Naive thymus-derived CD4-positive, alpha-beta T cell (primary cell): ENCODE measurements at regions of chr1 and their contacts with region 1.

Region 1: DNA sequence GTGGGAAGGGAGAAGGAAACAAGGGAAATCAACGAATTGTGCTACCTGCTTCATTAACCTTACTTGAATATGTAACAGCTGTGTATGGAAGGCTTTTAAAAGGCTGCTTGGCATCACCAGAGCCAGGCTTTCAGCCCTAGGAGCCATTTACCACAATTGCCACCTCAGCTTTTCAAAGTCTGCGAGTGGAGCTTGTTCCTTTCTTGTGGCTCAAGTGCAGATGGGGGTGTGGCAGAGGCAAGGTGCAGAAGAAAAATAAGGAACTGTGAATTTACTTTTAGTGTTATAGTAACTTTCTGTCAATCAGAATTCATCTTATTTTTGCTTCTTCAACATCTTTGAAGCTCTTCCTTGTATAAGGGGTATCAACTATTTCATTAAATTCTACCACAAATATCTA is 17.6 kb downstream of the CLCA2 start:
- DNase-seq: peak in 8 of 9 donors; percentile 8 to 78 (median 64)
- ATAC-seq: peak; percentile 94
- H3K4me3 ChIP-seq: no peak overlapping the region
- H3K4me3 Mint-ChIP-seq: peak overlapping the region in 7 of 10 donors; percentile 3 to 42 (median 8)
- H3K27ac ChIP-seq: no peak overlapping the region
- H3K27ac Mint-ChIP-seq: peak overlapping the region in 1 of 9 donors; percentile 6
- H3K4me1 ChIP-seq: peaks cover 0 to 12% of the 10 kb centered on the region in 2 donors
- H3K4me1 Mint-ChIP-seq: peaks cover 0 to 13% (median 10%) of the 10 kb centered on the region in 7 donors
- H3K27me3 ChIP-seq: no peaks in the 10 kb centered on the region
- H3K27me3 Mint-ChIP-seq: peaks cover 0 to 18% (median 11%) of the 10 kb centered on the region in 5 donors

Region 2: GRCh38 chr1:86460998-86461397 is 19.4 kb after region 1 on chr1:
- CTCF ChIA-PET with region 1: no interaction called
- POLR2A ChIA-PET with region 1: no interaction called
- intact Hi-C with region 1: loop called in 1 of 2 experiments (anchors 1 kb)
- DNase-seq: no peak
- ATAC-seq: no peak
- H3K4me3 ChIP-seq: no peak overlapping the region
- H3K4me3 Mint-ChIP-seq: no peak overlapping the region
- H3K27ac ChIP-seq: no peak overlapping the region
- H3K27ac Mint-ChIP-seq: no peak overlapping the region
- H3K4me1 ChIP-seq: no peaks in the 10 kb centered on the region
- H3K4me1 Mint-ChIP-seq: no peaks in the 10 kb centered on the region
- H3K27me3 ChIP-seq: no peaks in the 10 kb centered on the region
- H3K27me3 Mint-ChIP-seq: peaks cover 9 to 22% (median 10%) of the 10 kb centered on the region in 5 donors